ENCODE measurements at regions of chr3 and their contacts with region 1.

Region 1: GRCh38 chr3:12706504-12707253 is 42.8 kb upstream of the RAF1 start:
- DNase-seq: peak; percentile 88
- H3K4me3 ChIP-seq: no peak overlapping the region
- H3K27ac ChIP-seq: no peak overlapping the region
- H3K4me1 ChIP-seq: peaks cover 21% of the 10 kb centered on the region
- CTCF ChIP-seq: peak; percentile 97

Region 2: DNA sequence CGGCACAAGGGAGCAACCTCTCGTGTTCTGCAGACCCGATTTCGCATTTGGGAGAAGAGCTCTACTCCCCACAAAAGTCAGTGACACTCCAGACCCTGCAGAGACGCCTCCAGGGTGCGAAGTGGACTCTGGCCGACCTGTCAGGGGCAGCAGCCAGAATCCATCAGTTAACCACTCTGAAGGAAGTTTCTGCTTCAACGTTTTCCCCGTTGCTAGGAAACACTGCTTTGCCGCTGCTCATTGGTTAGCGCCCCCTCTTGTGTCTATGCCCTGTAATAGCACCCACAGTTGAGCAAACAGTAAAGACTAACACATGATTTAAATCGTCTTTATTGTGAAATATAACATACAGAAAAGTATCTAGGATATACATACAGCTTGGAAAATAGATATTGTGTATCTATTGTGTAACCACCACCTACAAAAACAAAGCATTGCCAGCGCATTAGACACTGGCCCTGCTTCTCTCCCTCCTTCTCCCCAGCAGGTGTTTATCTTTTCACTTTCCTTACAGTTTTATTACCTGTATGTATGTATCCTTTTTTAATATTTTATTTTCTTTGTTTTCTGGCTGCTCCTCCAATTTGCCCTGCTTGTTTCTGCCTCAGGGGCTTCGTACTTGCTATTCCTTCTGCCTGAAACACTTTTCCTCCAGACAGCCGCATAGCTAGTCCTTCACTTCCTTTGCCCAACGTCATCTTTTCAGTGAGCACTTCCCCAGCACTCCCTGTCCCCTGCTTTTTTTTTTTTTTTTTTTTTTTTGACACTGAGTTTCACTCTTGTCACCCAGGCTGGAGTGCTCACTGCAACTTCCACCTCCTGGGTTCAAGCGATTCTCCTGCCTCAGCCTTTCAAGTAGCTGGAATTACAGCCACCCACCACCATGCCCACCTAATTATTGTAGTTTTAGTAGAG is 13.6 kb after region 1 on chr3:
- CTCF ChIA-PET with region 1: interaction called, 4 read pairs
- POLR2A ChIA-PET with region 1: interaction called, 11 read pairs
- intact Hi-C with region 1: no loop called
- DNase-seq: peak; percentile 86
- H3K4me3 ChIP-seq: peak overlapping the region; percentile 43
- H3K27ac ChIP-seq: no peak overlapping the region
- H3K4me1 ChIP-seq: peaks cover 21% of the 10 kb centered on the region
- CTCF ChIP-seq: peak; percentile 97

Region 3: DNA sequence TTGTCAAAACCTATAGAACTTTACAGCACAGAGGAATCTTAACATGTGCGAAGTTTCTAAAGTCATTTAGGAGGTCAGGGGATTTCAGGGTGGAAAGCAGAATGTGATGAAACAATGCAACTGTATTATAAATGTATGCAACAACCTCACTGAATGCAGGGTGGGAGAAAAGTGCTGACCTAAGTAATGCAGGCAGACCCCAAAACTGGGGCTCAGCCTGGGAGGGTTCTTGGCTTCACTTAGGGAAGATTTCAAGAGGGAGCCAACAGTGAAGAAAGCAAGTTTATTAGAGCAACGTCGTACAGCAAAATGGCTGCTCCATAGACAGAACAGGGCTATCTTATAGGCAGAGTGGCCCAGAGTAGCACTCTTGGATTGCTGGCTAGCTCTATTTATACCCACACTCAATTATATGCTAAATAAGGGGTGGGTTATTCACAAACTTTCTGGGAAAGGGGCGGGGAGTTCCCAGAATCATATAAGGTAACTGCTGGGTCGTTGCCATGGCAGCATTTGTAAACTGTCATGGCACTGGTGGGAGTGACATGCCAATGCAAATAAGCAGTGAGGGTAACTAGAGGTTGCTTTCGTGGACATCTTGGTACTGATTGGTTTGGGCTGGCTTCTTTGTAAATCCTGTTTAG is 75.6 kb after region 1 on chr3:
- CTCF ChIA-PET with region 1: no interaction called
- POLR2A ChIA-PET with region 1: interaction called, 3 read pairs
- intact Hi-C with region 1: loop called (anchors 10 kb)
- DNase-seq: no peak
- H3K4me3 ChIP-seq: no peak overlapping the region
- H3K27ac ChIP-seq: no peak overlapping the region
- H3K4me1 ChIP-seq: peaks cover 4% of the 10 kb centered on the region
- CTCF ChIP-seq: no peak

Region 4: GRCh38 chr3:12841149-12841970 is 134.7 kb after region 1 on chr3 and contains the start of gene RPL32:
- CTCF ChIA-PET with region 1: interaction called, 3 read pairs
- POLR2A ChIA-PET with region 1: interaction called, 3 read pairs
- intact Hi-C with region 1: loop called (anchors 5 kb)
- DNase-seq: peak; percentile 98
- H3K4me3 ChIP-seq: peak within 1 kb of the TSS; percentile 100
- H3K27ac ChIP-seq: peak within 1 kb of the TSS; percentile 67
- H3K4me1 ChIP-seq: peaks cover 43% of the 10 kb centered on the region
- CTCF ChIP-seq: peak; percentile 93
- total RNA-seq, gene RPL32: 3,339 and 3,717 TPM in 2 replicates

Region 5: DNA sequence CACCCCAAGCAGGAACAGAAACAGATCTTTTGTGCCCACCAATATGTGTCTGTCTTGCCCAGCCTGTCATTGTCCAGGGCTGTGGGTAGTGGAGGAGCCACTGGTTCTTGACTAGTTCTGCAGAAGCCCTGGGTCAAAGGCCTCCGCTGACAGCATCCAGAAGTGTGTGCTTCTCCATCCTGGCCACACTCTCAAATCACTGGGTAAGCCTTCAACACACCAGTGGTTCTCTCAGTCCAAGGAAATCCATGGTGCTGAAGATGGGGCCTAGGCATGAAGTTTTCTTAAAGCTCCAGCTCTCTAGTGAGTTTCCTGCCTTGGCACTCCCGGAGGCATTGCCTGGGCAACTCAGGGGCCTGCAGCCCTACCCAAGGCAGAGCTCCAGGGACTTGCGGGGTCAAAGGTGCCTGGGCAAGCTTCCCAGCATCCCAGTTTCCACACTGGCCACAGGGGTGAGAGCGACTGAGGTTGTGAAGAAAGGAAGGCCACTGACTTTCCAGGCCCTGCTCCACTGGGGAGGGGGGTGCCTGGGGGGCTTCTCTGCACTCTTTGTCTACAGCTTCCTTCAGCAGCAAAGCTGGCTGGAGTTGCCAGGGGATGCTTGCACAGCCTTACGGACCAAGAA is 172.6 kb after region 1 on chr3:
- CTCF ChIA-PET with region 1: no interaction called
- POLR2A ChIA-PET with region 1: no interaction called
- intact Hi-C with region 1: no loop called
- DNase-seq: no peak
- H3K4me3 ChIP-seq: no peak overlapping the region
- H3K27ac ChIP-seq: no peak overlapping the region
- H3K4me1 ChIP-seq: peaks cover 4% of the 10 kb centered on the region
- CTCF ChIP-seq: no peak

Region 6: GRCh38 chr3:12891985-12892839 is 185.5 kb after region 1 on chr3:
- CTCF ChIA-PET with region 1: no interaction called
- POLR2A ChIA-PET with region 1: no interaction called
- intact Hi-C with region 1: loop called (anchors 5 kb)
- DNase-seq: peak; percentile 70
- H3K4me3 ChIP-seq: no peak overlapping the region
- H3K27ac ChIP-seq: no peak overlapping the region
- H3K4me1 ChIP-seq: peaks cover 4% of the 10 kb centered on the region
- CTCF ChIP-seq: peak; percentile 95

Measured in OCI-LY7 (cell line).